ENCODE measurements at regions of chr20 and their contacts with region 1.

Region 1: DNA sequence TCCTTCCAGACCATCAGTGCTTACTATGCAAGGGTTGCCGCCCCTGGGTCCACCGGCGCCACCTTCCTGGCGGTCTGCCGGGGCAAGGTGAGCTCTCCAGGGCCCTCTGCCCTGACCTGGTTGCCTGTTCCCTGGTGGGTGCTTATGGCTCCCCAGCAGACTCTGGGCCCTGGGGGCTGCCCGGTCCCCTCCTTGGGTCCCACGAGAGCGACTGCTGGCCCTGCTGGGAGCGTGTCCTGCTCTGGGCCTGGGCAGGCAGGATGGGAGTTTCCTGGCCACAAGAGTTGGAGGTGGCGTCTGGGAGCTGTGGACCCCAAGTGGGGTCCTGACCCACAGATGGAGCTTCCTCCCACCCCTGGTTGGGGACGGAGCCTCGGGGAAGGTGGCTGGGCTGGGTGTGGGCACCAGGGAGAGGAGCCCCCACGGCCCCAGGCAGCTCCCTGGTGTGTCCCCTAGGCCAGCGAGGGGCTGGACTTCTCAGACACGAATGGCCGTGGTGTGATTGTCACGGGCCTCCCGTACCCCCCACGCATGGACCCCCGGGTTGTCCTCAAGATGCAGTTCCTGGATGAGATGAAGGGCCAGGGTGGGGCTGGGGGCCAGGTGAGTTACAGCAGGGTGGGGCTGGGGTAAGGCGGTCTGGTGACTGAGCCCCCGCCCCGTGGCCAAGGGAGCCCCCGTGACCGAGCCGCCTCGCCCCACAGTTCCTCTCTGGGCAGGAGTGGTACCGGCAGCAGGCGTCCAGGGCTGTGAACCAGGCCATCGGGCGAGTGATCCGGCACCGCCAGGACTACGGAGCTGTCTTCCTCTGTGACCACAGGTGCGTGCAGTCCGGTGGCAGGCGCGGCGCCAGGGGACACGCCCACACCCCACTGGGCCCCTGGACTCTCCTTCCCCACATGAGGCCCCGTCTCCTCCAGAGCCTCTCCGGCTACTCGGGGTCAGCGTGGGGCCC is 7.1 kb upstream of the TNFRSF6B start:
- DNase-seq: no peak
- H3K4me3 ChIP-seq: no peak overlapping the region
- H3K4me3 Mint-ChIP-seq: no peak overlapping the region
- H3K27ac ChIP-seq: no peak overlapping the region
- H3K27ac Mint-ChIP-seq: no peak overlapping the region
- H3K4me1 ChIP-seq: peaks cover 16% of the 10 kb centered on the region
- H3K4me1 Mint-ChIP-seq: peaks cover 0 to 11% (median 2%) of the 10 kb centered on the region in 3 donors
- H3K27me3 ChIP-seq: no peaks in the 10 kb centered on the region
- H3K27me3 Mint-ChIP-seq: peaks cover 0 to 7% of the 10 kb centered on the region in 2 donors

Region 2: GRCh38 chr20:63808964-63809674 is 119.8 kb after region 1 on chr20:
- CTCF ChIA-PET with region 1: no interaction called
- POLR2A ChIA-PET with region 1: interaction called, 13 read pairs
- DNase-seq: no peak
- H3K4me3 ChIP-seq: no peak overlapping the region
- H3K4me3 Mint-ChIP-seq: no peak overlapping the region
- H3K27ac ChIP-seq: no peak overlapping the region
- H3K27ac Mint-ChIP-seq: no peak overlapping the region
- H3K4me1 ChIP-seq: no peaks in the 10 kb centered on the region
- H3K4me1 Mint-ChIP-seq: no peaks in the 10 kb centered on the region
- H3K27me3 ChIP-seq: no peaks in the 10 kb centered on the region
- H3K27me3 Mint-ChIP-seq: peaks cover 6 to 20% of the 10 kb centered on the region in 2 donors

Region 3: DNA sequence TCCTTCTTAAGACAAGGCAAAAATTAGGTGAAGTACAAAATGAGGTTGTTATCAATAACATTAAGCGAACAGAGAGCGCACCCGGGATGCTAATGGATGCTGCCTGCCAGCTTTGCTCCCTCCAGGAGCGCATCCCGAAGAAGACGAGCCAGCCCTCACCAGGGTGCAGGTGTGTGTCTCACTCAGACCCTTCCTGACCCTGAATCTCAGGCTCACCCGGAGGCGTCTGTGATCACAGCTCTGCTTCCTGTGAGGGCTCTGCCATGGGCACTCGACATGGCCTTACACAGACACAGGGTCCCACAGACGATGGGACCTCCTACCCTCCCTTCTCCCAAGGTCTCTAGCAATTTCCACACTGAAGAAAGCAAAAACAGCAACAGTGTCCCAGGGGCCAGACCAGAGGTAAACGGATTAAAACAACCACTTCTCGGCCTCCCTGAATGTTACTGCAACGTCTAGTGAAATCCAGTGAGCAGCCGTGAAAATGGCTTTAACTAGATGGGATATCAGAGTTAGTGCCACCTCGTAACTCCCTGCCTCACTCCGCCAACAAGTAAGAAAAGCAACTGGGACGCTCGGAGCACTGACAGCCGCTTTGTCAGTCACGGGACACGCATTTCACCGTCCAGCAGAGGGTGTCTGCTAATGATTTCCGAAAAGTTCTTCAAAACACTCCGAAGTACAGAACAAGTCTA is 130.1 kb after region 1 on chr20:
- CTCF ChIA-PET with region 1: no interaction called
- POLR2A ChIA-PET with region 1: no interaction called
- DNase-seq: no peak
- H3K4me3 ChIP-seq: no peak overlapping the region
- H3K4me3 Mint-ChIP-seq: peak overlapping the region in 5 of 7 donors; percentile 32 to 78 (median 61)
- H3K27ac ChIP-seq: peak overlapping the region; percentile 38
- H3K27ac Mint-ChIP-seq: peak overlapping the region in 3 of 8 donors; percentile 17 to 73 (median 45)
- H3K4me1 ChIP-seq: no peaks in the 10 kb centered on the region
- H3K4me1 Mint-ChIP-seq: peaks cover 0 to 4% (median 2%) of the 10 kb centered on the region in 3 donors
- H3K27me3 ChIP-seq: no peaks in the 10 kb centered on the region
- H3K27me3 Mint-ChIP-seq: peaks cover 22 to 24% of the 10 kb centered on the region in 2 donors

Measured in CD8-positive, alpha-beta memory T cell (primary cell).